ENCODE measurements at regions of chr18 and their contacts with region 1.

Region 1: GRCh38 chr18:67515945-67516538 is 478 bp downstream of the DSEL start:
- DNase-seq: peak; percentile 14 to 52 (median 44)
- ATAC-seq: peak; percentile 5
- H3K4me3 ChIP-seq: peak overlapping the region; percentile 60
- H3K4me3 Mint-ChIP-seq: peak overlapping the region; percentile 84 to 97 (median 94)
- H3K27ac ChIP-seq: no peak overlapping the region
- H3K27ac Mint-ChIP-seq: peak overlapping the region in 5 of 9 donors; percentile 59 to 88 (median 78)
- H3K4me1 ChIP-seq: peaks cover 11 to 14% of the 10 kb centered on the region in 2 donors
- H3K4me1 Mint-ChIP-seq: peaks cover 16 to 34% (median 31%) of the 10 kb centered on the region in 7 donors
- H3K27me3 ChIP-seq: no peaks in the 10 kb centered on the region
- H3K27me3 Mint-ChIP-seq: peaks cover 0 to 57% (median 0%) of the 10 kb centered on the region in 5 donors

Region 2: DNA sequence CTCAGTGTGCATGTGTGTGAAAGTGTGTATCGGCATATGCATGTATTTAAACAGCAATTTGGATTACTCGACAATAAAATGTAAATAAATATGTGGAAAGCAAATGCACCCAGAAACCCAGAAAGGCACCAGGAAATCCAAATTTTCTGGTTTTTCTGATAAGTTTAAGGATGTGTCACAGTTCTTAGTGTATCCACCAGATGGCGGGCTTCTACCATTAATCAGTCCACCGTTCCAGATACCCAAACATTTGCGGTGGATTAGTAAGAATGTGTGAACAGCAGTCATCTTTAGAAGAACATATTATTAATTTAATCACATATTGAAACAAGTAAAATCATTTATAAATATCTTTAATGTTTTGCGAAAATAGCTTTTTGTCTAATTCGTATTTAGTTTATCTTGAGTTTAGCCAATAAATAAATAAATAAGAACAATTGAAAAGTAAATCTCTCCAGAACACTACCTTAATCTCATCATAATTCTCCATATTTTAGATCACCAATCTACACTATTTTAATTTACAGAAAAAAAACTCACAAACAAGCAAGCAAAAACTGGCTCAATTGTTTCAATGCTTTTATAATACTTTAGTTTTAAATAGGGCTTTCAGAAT is 298.4 kb before region 1 on chr18:
- CTCF ChIA-PET with region 1: no interaction called
- POLR2A ChIA-PET with region 1: no interaction called
- intact Hi-C with region 1: loop called (anchors 1 to 5 kb)
- DNase-seq: peak; percentile 13 to 67 (median 58)
- ATAC-seq: peak; percentile 89
- H3K4me3 ChIP-seq: no peak overlapping the region
- H3K4me3 Mint-ChIP-seq: no peak overlapping the region
- H3K27ac ChIP-seq: no peak overlapping the region
- H3K27ac Mint-ChIP-seq: no peak overlapping the region
- H3K4me1 ChIP-seq: no peaks in the 10 kb centered on the region
- H3K4me1 Mint-ChIP-seq: peaks cover 0 to 3% (median 0%) of the 10 kb centered on the region in 7 donors
- H3K27me3 ChIP-seq: no peaks in the 10 kb centered on the region
- H3K27me3 Mint-ChIP-seq: peaks cover 0 to 4% (median 0%) of the 10 kb centered on the region in 5 donors

Region 3: GRCh38 chr18:67417864-67418523 is 98.0 kb before region 1 on chr18:
- CTCF ChIA-PET with region 1: no interaction called
- POLR2A ChIA-PET with region 1: no interaction called
- intact Hi-C with region 1: loop called (anchors 1 to 2 kb)
- DNase-seq: peak in 7 of 9 donors; percentile 16 to 50 (median 36)
- ATAC-seq: peak; percentile 57
- H3K4me3 ChIP-seq: peak overlapping the region; percentile 53
- H3K4me3 Mint-ChIP-seq: peak overlapping the region; percentile 36 to 81 (median 73)
- H3K27ac ChIP-seq: no peak overlapping the region
- H3K27ac Mint-ChIP-seq: peak overlapping the region; percentile 33 to 83 (median 49)
- H3K4me1 ChIP-seq: no peaks in the 10 kb centered on the region
- H3K4me1 Mint-ChIP-seq: peaks cover 3 to 10% (median 9%) of the 10 kb centered on the region in 7 donors
- H3K27me3 ChIP-seq: no peaks in the 10 kb centered on the region
- H3K27me3 Mint-ChIP-seq: no peaks in the 10 kb centered on the region

Region 4: GRCh38 chr18:67553471-67553870 is 37.4 kb after region 1 on chr18:
- CTCF ChIA-PET with region 1: no interaction called
- POLR2A ChIA-PET with region 1: no interaction called
- intact Hi-C with region 1: no loop called
- DNase-seq: no peak
- ATAC-seq: no peak
- H3K4me3 ChIP-seq: no peak overlapping the region
- H3K4me3 Mint-ChIP-seq: no peak overlapping the region
- H3K27ac ChIP-seq: no peak overlapping the region
- H3K27ac Mint-ChIP-seq: no peak overlapping the region
- H3K4me1 ChIP-seq: no peaks in the 10 kb centered on the region
- H3K4me1 Mint-ChIP-seq: peaks cover 0 to 4% (median 0%) of the 10 kb centered on the region in 7 donors
- H3K27me3 ChIP-seq: no peaks in the 10 kb centered on the region
- H3K27me3 Mint-ChIP-seq: peaks cover 0 to 7% (median 4%) of the 10 kb centered on the region in 5 donors

Region 5: DNA sequence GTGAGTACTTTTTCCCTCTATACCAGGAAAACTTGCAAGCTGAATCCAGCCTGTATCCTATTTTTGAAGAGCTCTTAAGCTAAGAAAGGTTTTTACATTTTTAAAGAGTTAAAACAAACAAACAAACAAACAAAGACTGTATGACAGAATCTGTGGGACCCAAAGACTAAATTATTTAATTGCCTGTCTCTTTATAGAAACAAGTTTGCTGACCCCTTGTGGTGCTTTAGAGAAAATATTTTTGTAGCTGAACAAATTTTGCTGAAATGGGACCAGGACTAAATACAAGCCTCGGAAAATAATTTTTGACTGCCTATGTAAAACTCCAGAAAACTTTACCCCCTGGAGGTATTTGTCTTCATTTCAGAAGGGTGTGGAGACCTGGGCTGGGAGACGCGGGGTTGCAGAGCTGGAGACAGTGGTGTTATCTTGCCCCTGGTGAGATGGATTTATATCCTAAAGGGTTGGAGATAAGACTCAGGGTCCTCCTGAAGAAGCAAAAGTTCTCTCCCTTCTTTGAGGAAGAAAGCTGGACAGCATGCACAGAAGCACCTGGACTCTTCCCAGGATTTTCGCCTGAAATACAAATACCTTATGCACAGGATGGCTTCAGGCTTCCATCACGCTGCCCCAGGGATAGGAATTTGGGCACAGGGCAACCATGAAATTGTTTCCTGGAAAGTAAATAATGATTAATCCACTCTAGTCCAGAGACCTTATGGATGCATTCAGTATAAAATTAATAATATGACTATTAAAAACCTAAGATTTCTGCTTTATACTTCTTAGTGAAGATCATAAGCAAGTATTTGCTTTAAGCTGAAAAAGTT is 1144.5 kb after region 1 on chr18:
- CTCF ChIA-PET with region 1: interaction called, 4 read pairs
- POLR2A ChIA-PET with region 1: no interaction called
- intact Hi-C with region 1: loop called in 1 of 2 experiments (anchors 1 kb)
- DNase-seq: peak in 6 of 9 donors; percentile 2 to 34 (median 24)
- ATAC-seq: no peak
- H3K4me3 ChIP-seq: no peak overlapping the region
- H3K4me3 Mint-ChIP-seq: no peak overlapping the region
- H3K27ac ChIP-seq: no peak overlapping the region
- H3K27ac Mint-ChIP-seq: no peak overlapping the region
- H3K4me1 ChIP-seq: no peaks in the 10 kb centered on the region
- H3K4me1 Mint-ChIP-seq: no peaks in the 10 kb centered on the region
- H3K27me3 ChIP-seq: no peaks in the 10 kb centered on the region
- H3K27me3 Mint-ChIP-seq: peaks cover 0 to 8% (median 4%) of the 10 kb centered on the region in 5 donors

Region 6: GRCh38 chr18:68735483-68736343 is 1219.7 kb after region 1 on chr18:
- CTCF ChIA-PET with region 1: no interaction called
- POLR2A ChIA-PET with region 1: no interaction called
- intact Hi-C with region 1: loop called in 1 of 2 experiments (anchors 1 kb)
- DNase-seq: peak in 5 of 9 donors; percentile 28 to 46 (median 36)
- ATAC-seq: peak; percentile 78
- H3K4me3 ChIP-seq: no peak overlapping the region
- H3K4me3 Mint-ChIP-seq: no peak overlapping the region
- H3K27ac ChIP-seq: no peak overlapping the region
- H3K27ac Mint-ChIP-seq: no peak overlapping the region
- H3K4me1 ChIP-seq: no peaks in the 10 kb centered on the region
- H3K4me1 Mint-ChIP-seq: peaks cover 0 to 5% (median 0%) of the 10 kb centered on the region in 7 donors
- H3K27me3 ChIP-seq: no peaks in the 10 kb centered on the region
- H3K27me3 Mint-ChIP-seq: no peaks in the 10 kb centered on the region

Measured in naive thymus-derived CD4-positive, alpha-beta T cell (primary cell).